CD4-positive, alpha-beta T cell (primary cell): ENCODE measurements at regions of chr1 and their contacts with region 1.

Region 1: DNA sequence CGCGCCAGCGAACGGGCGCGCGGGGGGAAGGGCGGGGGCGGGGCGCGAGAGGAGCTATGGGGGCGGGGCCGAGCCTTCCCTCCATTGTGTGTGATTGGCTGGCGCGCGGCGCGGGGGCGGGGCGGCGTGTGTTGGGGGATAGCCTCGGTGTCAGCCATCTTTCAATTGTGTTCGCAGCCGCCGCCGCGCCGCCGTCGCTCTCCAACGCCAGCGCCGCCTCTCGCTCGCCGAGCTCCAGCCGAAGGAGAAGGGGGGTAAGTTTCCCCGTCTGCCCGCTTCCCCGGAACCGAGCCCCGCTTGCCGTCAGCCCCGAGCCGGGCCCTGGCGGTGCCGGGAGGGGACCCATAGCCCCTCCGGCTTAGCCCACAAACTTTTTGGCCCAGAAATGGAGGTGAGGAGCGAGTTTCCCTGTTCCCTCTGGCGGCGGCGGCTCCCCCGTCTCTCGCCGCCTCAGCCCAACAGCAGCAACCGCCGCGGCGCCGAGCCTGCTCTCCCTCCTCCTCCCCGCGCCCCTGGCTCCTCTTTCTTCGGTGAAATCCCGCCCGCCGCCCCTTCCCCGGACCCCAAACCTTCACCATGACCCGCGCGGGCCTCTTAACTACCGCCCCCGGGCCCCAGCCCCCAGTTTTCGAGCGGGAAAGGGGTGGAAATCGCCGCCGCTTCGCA is at the start of gene H3-3A:
- DNase-seq: peak; percentile 97 to 100 (median 98)
- ATAC-seq: peak; percentile 78
- H3K4me3 ChIP-seq: peak within 1 kb of the TSS; percentile 90
- H3K4me3 Mint-ChIP-seq: peak within 1 kb of the TSS; percentile 100
- H3K27ac ChIP-seq: peak within 1 kb of the TSS; percentile 89 to 97
- H3K27ac Mint-ChIP-seq: peak within 1 kb of the TSS; percentile 99
- H3K4me1 ChIP-seq: peaks cover 24% of the 10 kb centered on the region
- H3K4me1 Mint-ChIP-seq: peaks cover 62% of the 10 kb centered on the region
- H3K27me3 ChIP-seq: no peaks in the 10 kb centered on the region
- H3K27me3 Mint-ChIP-seq: no peaks in the 10 kb centered on the region
- CTCF ChIP-seq: no peak
- total RNA-seq, gene H3-3A: 372 to 380 TPM

Region 2: DNA sequence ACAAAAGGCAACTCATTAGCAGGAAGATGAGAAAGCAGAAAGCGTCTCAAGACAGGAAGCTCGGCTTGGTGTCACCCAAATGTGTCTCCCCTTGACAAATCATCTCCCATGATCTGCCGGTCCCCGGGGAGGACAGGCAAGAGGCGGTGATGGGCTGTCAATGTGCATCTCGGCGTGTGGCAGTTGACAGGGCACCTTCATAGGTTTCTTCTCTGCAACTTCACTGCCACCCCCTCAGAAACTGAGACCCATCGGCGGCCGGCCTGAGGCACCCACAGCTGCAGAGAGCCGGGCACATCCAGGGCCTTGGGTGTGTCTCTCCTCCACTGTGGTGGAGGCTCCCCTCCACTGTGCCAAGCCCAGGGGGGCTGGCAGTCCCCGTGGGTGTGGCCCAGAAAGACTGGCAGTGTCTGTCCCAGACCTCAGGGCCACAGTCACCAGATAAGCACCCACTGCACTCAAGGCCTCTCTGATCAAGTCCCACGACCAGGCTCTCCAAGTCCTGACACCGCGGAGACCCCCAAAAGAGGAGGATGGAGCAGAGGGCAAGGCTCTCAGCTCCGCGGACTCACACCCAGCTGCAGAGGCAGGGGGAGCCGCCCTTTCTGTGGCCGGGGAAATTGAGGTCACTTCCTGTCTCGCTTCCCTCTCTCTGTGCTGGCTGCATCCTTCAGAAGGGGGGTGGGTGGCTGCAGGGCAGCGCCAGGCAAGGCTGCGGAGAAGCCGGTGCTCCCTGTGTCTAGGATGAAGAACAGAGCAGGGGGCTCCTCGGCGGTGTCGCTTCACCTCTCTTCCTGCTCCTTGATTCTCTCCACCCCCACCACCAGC is 595.3 kb before region 1 on chr1:
- CTCF ChIA-PET with region 1: no interaction called
- POLR2A ChIA-PET with region 1: interaction called, 30 read pairs
- intact Hi-C with region 1: loop called in 1 of 2 experiments (anchors 5 kb)
- DNase-seq: peak; percentile 67 to 94 (median 79)
- ATAC-seq: peak; percentile 85
- H3K4me3 ChIP-seq: peak overlapping the region; percentile 79
- H3K4me3 Mint-ChIP-seq: peak overlapping the region; percentile 96
- H3K27ac ChIP-seq: peak overlapping the region; percentile 92 to 94
- H3K27ac Mint-ChIP-seq: peak overlapping the region; percentile 99
- H3K4me1 ChIP-seq: peaks cover 56% of the 10 kb centered on the region
- H3K4me1 Mint-ChIP-seq: peaks cover 40% of the 10 kb centered on the region
- H3K27me3 ChIP-seq: no peaks in the 10 kb centered on the region
- H3K27me3 Mint-ChIP-seq: no peaks in the 10 kb centered on the region
- CTCF ChIP-seq: no peak

Region 3: DNA sequence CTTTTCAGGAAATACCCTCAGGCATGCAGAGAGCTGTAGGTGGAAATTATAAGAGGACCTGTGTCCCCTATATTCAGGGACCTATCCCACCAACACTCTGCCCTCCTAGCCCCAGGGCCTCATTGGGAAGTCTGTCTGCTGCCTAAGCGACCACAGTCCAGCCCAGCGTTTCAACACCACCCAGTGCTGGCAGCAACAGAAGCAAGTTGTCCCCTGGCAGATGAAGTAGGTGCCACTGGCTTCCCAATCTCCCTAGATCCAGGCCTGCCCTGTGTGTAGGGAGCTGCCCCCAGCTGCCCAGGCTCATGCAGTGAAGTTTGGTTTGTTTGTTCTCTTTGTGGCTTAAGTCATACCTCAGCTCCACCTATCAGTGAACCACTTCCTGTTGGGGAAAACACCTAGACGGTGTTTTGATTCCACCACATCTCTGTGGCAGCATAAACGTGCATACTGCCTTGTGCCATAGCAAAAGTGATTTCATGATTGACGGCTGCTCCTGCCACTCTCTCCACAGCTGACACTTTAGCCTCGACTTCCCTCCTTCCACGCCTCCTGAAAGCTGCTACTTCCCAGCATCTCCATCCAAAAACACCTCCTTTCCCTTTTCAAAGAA is 165.6 kb before region 1 on chr1:
- CTCF ChIA-PET with region 1: no interaction called
- POLR2A ChIA-PET with region 1: interaction called, 34 read pairs
- intact Hi-C with region 1: no loop called
- DNase-seq: peak; percentile 45 to 95 (median 60)
- ATAC-seq: peak; percentile 92
- H3K4me3 ChIP-seq: peak overlapping the region; percentile 26
- H3K4me3 Mint-ChIP-seq: peak overlapping the region; percentile 55
- H3K27ac ChIP-seq: peak overlapping the region; percentile 81 to 90
- H3K27ac Mint-ChIP-seq: peak overlapping the region; percentile 98
- H3K4me1 ChIP-seq: peaks cover 53% of the 10 kb centered on the region
- H3K4me1 Mint-ChIP-seq: peaks cover 60% of the 10 kb centered on the region
- H3K27me3 ChIP-seq: no peaks in the 10 kb centered on the region
- H3K27me3 Mint-ChIP-seq: no peaks in the 10 kb centered on the region
- CTCF ChIP-seq: no peak

Region 4: GRCh38 chr1:226051356-226051755 is 11.3 kb before region 1 on chr1:
- CTCF ChIA-PET with region 1: interaction called, 5 read pairs
- POLR2A ChIA-PET with region 1: interaction called, 12 read pairs
- intact Hi-C with region 1: no loop called
- DNase-seq: peak in 2 of 14 experiments; percentile 36 to 56
- ATAC-seq: no peak
- H3K4me3 ChIP-seq: no peak overlapping the region
- H3K4me3 Mint-ChIP-seq: no peak overlapping the region
- H3K27ac ChIP-seq: no peak overlapping the region
- H3K27ac Mint-ChIP-seq: no peak overlapping the region
- H3K4me1 ChIP-seq: no peaks in the 10 kb centered on the region
- H3K4me1 Mint-ChIP-seq: no peaks in the 10 kb centered on the region
- H3K27me3 ChIP-seq: no peaks in the 10 kb centered on the region
- H3K27me3 Mint-ChIP-seq: no peaks in the 10 kb centered on the region
- CTCF ChIP-seq: no peak

Region 5: DNA sequence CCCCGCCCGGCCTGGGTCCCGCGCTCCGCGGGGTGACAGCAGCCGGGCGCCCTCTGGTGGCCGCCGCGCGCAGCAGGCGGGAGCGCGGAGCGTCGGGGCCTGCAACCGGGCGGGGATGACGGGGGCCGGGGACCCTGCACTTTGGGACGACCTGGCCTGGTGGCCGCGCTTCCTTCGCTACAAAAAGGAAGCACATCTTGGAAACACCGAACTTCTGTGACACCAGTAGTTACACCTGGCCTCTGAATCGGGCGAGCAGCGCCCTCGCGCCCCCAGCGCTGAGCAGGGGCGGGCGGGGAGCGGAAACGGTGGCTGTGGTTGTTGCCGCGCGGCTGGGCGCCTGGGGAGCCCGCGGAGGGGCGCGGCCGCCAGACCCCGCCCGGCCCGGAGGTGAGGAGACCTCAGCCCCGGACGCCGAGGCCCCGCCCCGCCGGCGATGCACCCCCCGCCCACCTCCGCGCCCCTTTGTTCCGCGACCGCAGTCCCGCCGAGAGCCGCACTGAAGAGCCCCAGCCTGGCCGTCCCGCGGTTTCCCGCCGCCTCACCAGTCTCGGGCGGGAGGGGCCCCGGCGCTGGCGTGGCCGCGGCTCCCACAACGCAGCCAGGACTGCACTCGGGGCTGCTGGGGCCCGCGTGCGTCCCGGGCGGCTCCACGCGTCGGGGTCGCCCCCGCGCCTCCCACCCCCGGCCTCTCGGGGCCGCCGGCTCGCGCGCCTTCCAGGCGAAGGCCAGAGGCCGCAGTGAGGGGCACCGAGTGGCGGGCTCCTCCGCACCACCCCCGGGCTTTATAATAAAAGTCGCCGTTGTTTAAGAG is 59.1 kb after region 1 on chr1:
- CTCF ChIA-PET with region 1: interaction called, 28 read pairs
- POLR2A ChIA-PET with region 1: interaction called, 33 read pairs
- intact Hi-C with region 1: loop called (anchors 1 to 2 kb)
- DNase-seq: peak; percentile 48 to 90 (median 70)
- ATAC-seq: peak; percentile 54
- H3K4me3 ChIP-seq: peak overlapping the region; percentile 58
- H3K4me3 Mint-ChIP-seq: peak overlapping the region; percentile 80
- H3K27ac ChIP-seq: peak overlapping the region; percentile 45 to 77
- H3K27ac Mint-ChIP-seq: peak overlapping the region; percentile 91
- H3K4me1 ChIP-seq: peaks cover 37% of the 10 kb centered on the region
- H3K4me1 Mint-ChIP-seq: peaks cover 33% of the 10 kb centered on the region
- H3K27me3 ChIP-seq: no peaks in the 10 kb centered on the region
- H3K27me3 Mint-ChIP-seq: no peaks in the 10 kb centered on the region
- CTCF ChIP-seq: peak; percentile 64

Region 6: GRCh38 chr1:226940029-226940805 is 877.5 kb after region 1 on chr1 and contains the start of gene COQ8A:
- CTCF ChIA-PET with region 1: no interaction called
- POLR2A ChIA-PET with region 1: interaction called, 13 read pairs
- intact Hi-C with region 1: loop called in 1 of 2 experiments (anchors 10 kb)
- DNase-seq: peak; percentile 96 to 100 (median 99)
- ATAC-seq: peak; percentile 91
- H3K4me3 ChIP-seq: peak within 1 kb of the TSS; percentile 94
- H3K4me3 Mint-ChIP-seq: peak within 1 kb of the TSS; percentile 91
- H3K27ac ChIP-seq: peak within 1 kb of the TSS; percentile 96 to 98
- H3K27ac Mint-ChIP-seq: peak within 1 kb of the TSS; percentile 95
- H3K4me1 ChIP-seq: peaks cover 46% of the 10 kb centered on the region
- H3K4me1 Mint-ChIP-seq: peaks cover 68% of the 10 kb centered on the region
- H3K27me3 ChIP-seq: no peaks in the 10 kb centered on the region
- H3K27me3 Mint-ChIP-seq: no peaks in the 10 kb centered on the region
- CTCF ChIP-seq: no peak
- total RNA-seq, gene COQ8A: 55.0 to 56.0 TPM